ENCODE measurements at regions of chr10 and their contacts with region 1.

Region 1: GRCh38 chr10:58952747-58953466 is 223.5 kb upstream of the PHYHIPL start:
- DNase-seq: peak; percentile 59
- H3K4me3 Mint-ChIP-seq: no peak overlapping the region
- H3K27ac Mint-ChIP-seq: no peak overlapping the region
- H3K4me1 Mint-ChIP-seq: peaks cover 6% of the 10 kb centered on the region
- H3K27me3 Mint-ChIP-seq: peaks cover 9% of the 10 kb centered on the region
- CTCF ChIP-seq: peak; percentile 70

Region 2: DNA sequence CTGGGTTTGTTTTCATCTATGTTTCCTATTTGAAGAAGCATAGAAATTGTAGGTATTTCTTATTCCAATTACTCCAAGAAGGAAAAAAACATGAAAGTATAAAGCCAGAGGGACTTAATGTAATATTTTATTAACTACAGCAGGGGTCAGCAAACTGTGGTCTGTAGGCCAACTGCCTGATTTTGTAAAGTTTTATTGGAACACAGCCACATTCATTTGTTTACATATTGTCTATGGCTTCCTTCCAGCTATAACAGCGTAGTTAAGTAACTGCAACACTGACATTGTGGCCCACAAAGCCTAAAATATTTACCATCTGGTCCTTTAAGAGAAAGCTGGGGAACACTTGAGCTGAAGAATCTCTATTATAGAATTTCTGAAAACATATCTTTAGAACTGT is 134.0 kb before region 1 on chr10:
- CTCF ChIA-PET with region 1: interaction called, 5 read pairs
- POLR2A ChIA-PET with region 1: no interaction called
- intact Hi-C with region 1: loop called (anchors 2 kb)
- DNase-seq: peak; percentile 85
- H3K4me3 Mint-ChIP-seq: no peak overlapping the region
- H3K27ac Mint-ChIP-seq: peak overlapping the region; percentile 39
- H3K4me1 Mint-ChIP-seq: peaks cover 23% of the 10 kb centered on the region
- H3K27me3 Mint-ChIP-seq: no peaks in the 10 kb centered on the region
- CTCF ChIP-seq: peak; percentile 11

Region 3: GRCh38 chr10:59181668-59182067 is 228.8 kb after region 1 on chr10:
- CTCF ChIA-PET with region 1: interaction called, 23 read pairs
- POLR2A ChIA-PET with region 1: no interaction called
- intact Hi-C with region 1: loop called (anchors 1 kb)
- DNase-seq: peak; percentile 65
- H3K4me3 Mint-ChIP-seq: no peak overlapping the region
- H3K27ac Mint-ChIP-seq: no peak overlapping the region
- H3K4me1 Mint-ChIP-seq: no peaks in the 10 kb centered on the region
- H3K27me3 Mint-ChIP-seq: peaks cover 10% of the 10 kb centered on the region
- CTCF ChIP-seq: peak; percentile 48

Region 4: GRCh38 chr10:59240582-59241183 is 287.8 kb after region 1 on chr10:
- CTCF ChIA-PET with region 1: interaction called, 12 read pairs
- POLR2A ChIA-PET with region 1: no interaction called
- intact Hi-C with region 1: no loop called
- DNase-seq: peak; percentile 56
- H3K4me3 Mint-ChIP-seq: no peak overlapping the region
- H3K27ac Mint-ChIP-seq: no peak overlapping the region
- H3K4me1 Mint-ChIP-seq: no peaks in the 10 kb centered on the region
- H3K27me3 Mint-ChIP-seq: peaks cover 79% of the 10 kb centered on the region
- CTCF ChIP-seq: peak; percentile 58

Measured in MCF 10A (cell line).